CD4-positive, alpha-beta T cell (primary cell): ENCODE measurements at regions of chr19 and their contacts with region 1.

Region 1: GRCh38 chr19:14006243-14006765 is at the start of gene RFX1:
- DNase-seq: peak; percentile 99 to 100 (median 100)
- ATAC-seq: peak; percentile 74
- H3K4me3 ChIP-seq: peak within 1 kb of the TSS; percentile 80
- H3K4me3 Mint-ChIP-seq: peak within 1 kb of the TSS; percentile 91
- H3K27ac ChIP-seq: peak within 1 kb of the TSS; percentile 99
- H3K27ac Mint-ChIP-seq: peak within 1 kb of the TSS; percentile 91
- H3K4me1 ChIP-seq: peaks cover 51% of the 10 kb centered on the region
- H3K4me1 Mint-ChIP-seq: peaks cover 41% of the 10 kb centered on the region
- H3K27me3 ChIP-seq: no peaks in the 10 kb centered on the region
- H3K27me3 Mint-ChIP-seq: no peaks in the 10 kb centered on the region
- CTCF ChIP-seq: no peak
- total RNA-seq, gene RFX1: 14.6 to 16.3 TPM

Region 2: GRCh38 chr19:13733639-13734038 is 272.7 kb before region 1 on chr19:
- CTCF ChIA-PET with region 1: no interaction called
- POLR2A ChIA-PET with region 1: no interaction called
- intact Hi-C with region 1: no loop called
- DNase-seq: no peak
- ATAC-seq: no peak
- H3K4me3 ChIP-seq: no peak overlapping the region
- H3K4me3 Mint-ChIP-seq: no peak overlapping the region
- H3K27ac ChIP-seq: no peak overlapping the region
- H3K27ac Mint-ChIP-seq: no peak overlapping the region
- H3K4me1 ChIP-seq: peaks cover 20% of the 10 kb centered on the region
- H3K4me1 Mint-ChIP-seq: peaks cover 14% of the 10 kb centered on the region
- H3K27me3 ChIP-seq: no peaks in the 10 kb centered on the region
- H3K27me3 Mint-ChIP-seq: no peaks in the 10 kb centered on the region
- CTCF ChIP-seq: no peak

Region 3: GRCh38 chr19:13952154-13953035 is 53.9 kb before region 1 on chr19 and contains the start of gene DCAF15:
- CTCF ChIA-PET with region 1: interaction called, 4 read pairs
- POLR2A ChIA-PET with region 1: interaction called, 74 read pairs
- intact Hi-C with region 1: loop called (anchors 1 kb)
- DNase-seq: peak; percentile 96 to 100 (median 98)
- ATAC-seq: peak; percentile 97
- H3K4me3 ChIP-seq: peak within 1 kb of the TSS; percentile 82
- H3K4me3 Mint-ChIP-seq: peak within 1 kb of the TSS; percentile 100
- H3K27ac ChIP-seq: peak within 1 kb of the TSS; percentile 69 to 71
- H3K27ac Mint-ChIP-seq: peak within 1 kb of the TSS; percentile 97
- H3K4me1 ChIP-seq: peaks cover 30% of the 10 kb centered on the region
- H3K4me1 Mint-ChIP-seq: peaks cover 13% of the 10 kb centered on the region
- H3K27me3 ChIP-seq: no peaks in the 10 kb centered on the region
- H3K27me3 Mint-ChIP-seq: no peaks in the 10 kb centered on the region
- CTCF ChIP-seq: no peak
- total RNA-seq, gene DCAF15: 84.9 to 85.0 TPM

Region 4: DNA sequence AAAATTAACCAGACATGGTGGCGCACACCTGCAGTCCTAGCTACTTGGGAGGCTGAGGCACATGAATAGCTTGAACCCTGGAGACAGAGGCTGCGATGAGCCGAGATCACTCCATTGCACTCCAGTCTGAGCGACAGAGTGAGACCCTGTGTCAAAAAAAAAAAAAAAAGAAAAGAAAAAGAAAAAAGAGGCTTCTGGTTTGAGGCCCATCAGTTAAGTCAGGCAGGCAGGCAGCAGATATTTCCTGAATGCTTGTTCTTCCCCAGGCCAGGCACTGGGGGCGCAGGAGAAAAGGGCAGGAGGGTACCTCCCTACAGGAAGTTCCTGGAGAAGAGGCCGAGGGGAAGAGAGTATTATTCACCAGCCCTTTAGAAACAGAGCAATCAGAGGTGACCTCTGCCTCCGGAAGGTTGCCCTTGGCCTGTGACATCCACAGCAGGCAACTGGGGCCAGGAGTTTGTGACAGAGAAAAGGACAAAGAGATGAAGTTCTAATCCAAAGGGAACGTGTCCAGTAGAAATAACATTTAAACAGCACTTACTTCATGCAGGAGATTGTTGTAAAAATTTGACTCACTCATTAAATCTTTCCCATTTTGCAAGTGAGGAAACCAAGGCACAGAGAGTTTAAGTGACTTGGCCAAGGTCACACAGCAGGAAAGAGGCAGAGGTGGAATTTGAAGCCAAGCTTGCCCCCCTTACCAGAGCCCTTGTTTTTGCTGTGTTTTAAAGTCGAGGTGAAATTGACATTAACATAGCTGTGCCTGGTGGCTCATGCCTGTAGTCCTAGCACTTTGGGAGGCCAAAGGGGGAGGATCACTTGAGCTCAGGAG is 17.3 kb after region 1 on chr19:
- CTCF ChIA-PET with region 1: no interaction called
- POLR2A ChIA-PET with region 1: interaction called, 13 read pairs
- intact Hi-C with region 1: loop called in 1 of 2 experiments (anchors 1 kb)
- DNase-seq: peak in 3 of 14 experiments; percentile 46 to 64 (median 61)
- ATAC-seq: no peak
- H3K4me3 ChIP-seq: no peak overlapping the region
- H3K4me3 Mint-ChIP-seq: no peak overlapping the region
- H3K27ac ChIP-seq: no peak overlapping the region
- H3K27ac Mint-ChIP-seq: peak overlapping the region; percentile 44
- H3K4me1 ChIP-seq: peaks cover 24% of the 10 kb centered on the region
- H3K4me1 Mint-ChIP-seq: peaks cover 18% of the 10 kb centered on the region
- H3K27me3 ChIP-seq: no peaks in the 10 kb centered on the region
- H3K27me3 Mint-ChIP-seq: no peaks in the 10 kb centered on the region
- CTCF ChIP-seq: peak; percentile 26

Region 5: GRCh38 chr19:14048443-14049153 is 42.3 kb after region 1 on chr19:
- CTCF ChIA-PET with region 1: interaction called, 9 read pairs
- POLR2A ChIA-PET with region 1: interaction called, 3 read pairs
- intact Hi-C with region 1: loop called in 1 of 2 experiments (anchors 5 kb)
- DNase-seq: peak; percentile 53 to 84 (median 73)
- ATAC-seq: peak; percentile 94
- H3K4me3 ChIP-seq: no peak overlapping the region
- H3K4me3 Mint-ChIP-seq: no peak overlapping the region
- H3K27ac ChIP-seq: no peak overlapping the region
- H3K27ac Mint-ChIP-seq: peak overlapping the region; percentile 67
- H3K4me1 ChIP-seq: peaks cover 8% of the 10 kb centered on the region
- H3K4me1 Mint-ChIP-seq: peaks cover 10% of the 10 kb centered on the region
- H3K27me3 ChIP-seq: no peaks in the 10 kb centered on the region
- H3K27me3 Mint-ChIP-seq: no peaks in the 10 kb centered on the region
- CTCF ChIP-seq: peak; percentile 97